ENCODE measurements at regions of chr9 and their contacts with region 1.

Region 1: GRCh38 chr9:127396808-127397497 is at the start of gene SLC2A8:
- DNase-seq: peak; percentile 98
- ATAC-seq: peak; percentile 96
- H3K4me3 Mint-ChIP-seq: peak within 1 kb of the TSS; percentile 69
- H3K27ac Mint-ChIP-seq: peak within 1 kb of the TSS; percentile 53
- H3K4me1 Mint-ChIP-seq: peaks cover 18% of the 10 kb centered on the region
- H3K27me3 Mint-ChIP-seq: peaks cover 51% of the 10 kb centered on the region
- total RNA-seq, gene SLC2A8: 5.6 to 7.2 TPM

Region 2: DNA sequence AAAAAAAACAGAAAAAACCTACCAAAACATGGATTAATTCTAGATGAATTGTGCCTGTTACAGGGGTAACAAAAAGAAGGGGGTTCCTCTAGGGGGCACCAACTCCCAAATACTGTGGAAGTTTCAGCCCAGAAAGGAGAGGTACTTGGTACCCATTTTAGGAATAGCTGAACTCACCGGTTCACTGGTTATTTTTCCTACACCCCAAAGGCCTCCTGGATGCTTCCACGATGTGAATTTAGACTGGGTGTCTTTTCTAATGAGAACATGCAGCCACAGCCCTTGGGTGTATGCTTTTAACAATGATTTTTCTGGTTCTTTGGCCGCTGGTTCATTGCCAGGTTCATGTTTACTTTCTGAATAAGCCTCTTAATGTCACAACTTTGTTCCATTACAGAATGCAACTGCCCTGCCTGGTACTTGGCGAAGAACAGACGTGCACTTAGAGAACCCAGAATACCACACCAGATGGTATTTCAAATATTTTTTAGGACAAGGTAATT is 85.7 kb before region 1 on chr9:
- CTCF ChIA-PET with region 1: interaction called, 13 read pairs
- POLR2A ChIA-PET with region 1: no interaction called
- DNase-seq: peak; percentile 68
- ATAC-seq: peak; percentile 55
- H3K4me3 Mint-ChIP-seq: no peak overlapping the region
- H3K27ac Mint-ChIP-seq: no peak overlapping the region
- H3K4me1 Mint-ChIP-seq: no peaks in the 10 kb centered on the region
- H3K27me3 Mint-ChIP-seq: peaks cover 22% of the 10 kb centered on the region

Region 3: DNA sequence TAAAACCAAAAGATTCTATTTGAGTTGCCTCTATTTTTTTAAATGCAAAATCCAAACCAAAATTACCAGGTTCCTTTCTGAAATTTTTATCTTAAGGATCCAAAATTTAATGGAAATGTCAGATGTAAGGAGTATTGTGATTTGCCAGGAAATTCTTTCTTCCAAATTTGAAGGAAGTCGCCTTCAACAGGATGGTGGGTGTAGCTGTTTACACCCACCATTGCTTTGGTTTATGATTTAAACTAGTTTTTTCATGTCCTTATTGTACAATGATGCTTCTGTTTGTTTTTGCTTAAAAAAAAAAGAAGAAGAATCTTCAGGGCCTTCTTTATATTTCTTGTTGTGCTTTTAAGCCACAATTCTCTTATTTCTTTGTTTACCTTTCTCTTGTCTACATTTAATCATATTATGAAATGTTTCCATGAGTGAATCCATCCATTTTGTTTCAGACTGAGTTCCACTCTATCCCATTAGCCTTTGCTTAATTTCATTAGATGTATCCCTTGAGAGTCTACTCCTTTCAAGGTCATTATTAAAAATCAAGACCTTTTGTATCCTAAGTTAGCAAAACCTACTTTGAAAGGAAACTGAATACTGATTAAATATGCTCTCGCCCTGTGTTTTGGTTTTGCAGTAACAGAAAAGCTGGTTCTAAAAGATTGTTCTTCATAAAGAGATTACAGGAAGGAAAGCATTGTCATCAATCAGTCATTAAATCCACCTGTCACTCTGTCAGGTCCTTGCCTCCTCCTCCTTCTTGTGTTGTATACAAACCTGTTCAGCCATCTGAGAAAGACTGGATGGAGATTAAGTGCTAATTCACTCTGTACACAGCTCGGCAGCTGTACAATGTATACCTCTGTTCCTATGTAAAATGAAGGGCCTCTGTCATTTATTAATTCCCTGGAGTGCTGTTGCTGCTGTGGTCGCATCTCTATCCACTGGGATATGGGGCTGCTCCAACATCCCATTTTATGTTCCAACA is 45.5 kb before region 1 on chr9:
- CTCF ChIA-PET with region 1: no interaction called
- POLR2A ChIA-PET with region 1: no interaction called
- DNase-seq: no peak
- ATAC-seq: no peak
- H3K4me3 Mint-ChIP-seq: no peak overlapping the region
- H3K27ac Mint-ChIP-seq: no peak overlapping the region
- H3K4me1 Mint-ChIP-seq: no peaks in the 10 kb centered on the region
- H3K27me3 Mint-ChIP-seq: peaks cover 39% of the 10 kb centered on the region

Region 4: DNA sequence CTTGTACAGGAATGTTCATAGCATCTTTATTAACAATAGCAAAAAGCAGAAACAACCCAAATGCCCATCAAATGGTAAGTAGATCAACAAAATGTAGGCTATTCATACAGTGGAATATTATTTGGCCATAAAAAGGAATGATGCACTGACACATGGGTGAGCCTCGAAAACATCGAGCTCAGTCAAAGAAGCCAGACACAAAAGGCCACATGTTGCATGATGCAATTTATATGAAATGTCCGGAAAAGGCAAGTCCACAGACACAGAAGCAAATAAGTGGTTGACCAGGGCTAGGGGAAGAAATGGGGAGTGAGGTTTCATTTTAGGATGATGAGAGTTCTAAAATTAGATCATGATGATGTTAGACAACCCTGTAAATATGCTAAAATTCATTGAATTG is 16.5 kb before region 1 on chr9:
- CTCF ChIA-PET with region 1: no interaction called
- POLR2A ChIA-PET with region 1: no interaction called
- DNase-seq: no peak
- ATAC-seq: no peak
- H3K4me3 Mint-ChIP-seq: no peak overlapping the region
- H3K27ac Mint-ChIP-seq: no peak overlapping the region
- H3K4me1 Mint-ChIP-seq: no peaks in the 10 kb centered on the region
- H3K27me3 Mint-ChIP-seq: peaks cover 55% of the 10 kb centered on the region

Measured in activated CD8-positive, alpha-beta T cell treated with anti-CD3 and anti-CD28 coated beads, Interleukin-2, amount 10 ng/mL, durations not matched to agents 7 days and 5 days (primary cell).